OCI-LY7 (cell line): ENCODE measurements at regions of chr3 and their contacts with region 1.

Region 1: DNA sequence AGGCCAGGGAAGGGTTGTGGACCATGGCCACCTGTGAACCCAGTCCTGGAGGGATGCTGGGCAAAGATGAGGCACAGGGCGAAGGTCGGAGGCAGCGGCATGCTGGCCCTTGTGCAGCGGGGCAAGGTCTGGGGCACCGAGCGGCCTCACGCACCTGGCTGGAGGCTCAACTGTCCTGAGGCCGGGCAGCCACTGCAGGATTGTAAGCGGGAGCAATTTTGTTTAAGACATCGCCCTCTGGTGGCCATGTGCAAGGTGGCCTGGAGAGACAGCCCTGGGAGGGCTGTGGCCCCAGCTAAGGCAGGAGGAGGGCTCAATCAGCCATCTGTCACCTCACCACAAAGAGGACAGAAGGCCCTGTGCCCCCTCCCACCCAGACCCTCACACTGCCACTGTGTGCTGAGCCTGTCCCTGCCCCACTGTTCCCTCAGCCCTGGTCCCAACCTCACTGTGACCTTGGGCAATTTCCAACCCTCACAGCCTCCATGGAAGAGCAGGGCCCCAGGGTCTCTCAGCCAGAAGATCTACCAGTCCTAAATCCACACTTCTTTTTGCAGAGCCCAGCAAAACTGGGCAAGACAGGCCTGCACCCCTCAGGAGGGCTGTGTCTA is 46.2 kb downstream of the TPRA1 start:
- DNase-seq: peak; percentile 78
- H3K4me3 ChIP-seq: no peak overlapping the region
- H3K27ac ChIP-seq: no peak overlapping the region
- H3K4me1 ChIP-seq: peaks cover 3% of the 10 kb centered on the region
- CTCF ChIP-seq: peak; percentile 85

Region 2: DNA sequence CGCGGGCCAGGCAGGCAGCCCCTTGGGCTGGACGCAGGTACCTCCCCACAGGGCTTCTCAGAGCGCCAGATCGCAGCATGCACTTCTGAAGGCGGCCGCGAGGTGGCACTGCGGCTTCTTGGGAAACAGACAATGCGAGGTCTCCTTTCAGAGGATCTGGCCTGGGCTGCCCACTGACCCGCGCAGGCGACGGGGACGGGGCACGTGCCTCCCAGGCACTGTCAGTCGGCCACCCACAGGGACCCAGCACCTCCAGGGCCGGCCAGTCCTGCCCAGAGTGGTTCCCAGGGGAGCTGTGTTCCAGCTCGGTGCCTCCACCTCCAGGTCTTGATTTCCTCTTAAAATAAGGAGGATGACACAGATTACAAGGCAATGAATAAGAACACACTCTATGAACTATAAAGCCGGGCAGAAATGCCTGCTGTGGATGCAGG is 865.0 kb before region 1 on chr3:
- CTCF ChIA-PET with region 1: no interaction called
- POLR2A ChIA-PET with region 1: no interaction called
- intact Hi-C with region 1: loop called (anchors 10 kb)
- DNase-seq: peak; percentile 74
- H3K4me3 ChIP-seq: peak overlapping the region; percentile 34
- H3K27ac ChIP-seq: peak overlapping the region; percentile 38
- H3K4me1 ChIP-seq: peaks cover 27% of the 10 kb centered on the region
- CTCF ChIP-seq: peak; percentile 88

Region 3: DNA sequence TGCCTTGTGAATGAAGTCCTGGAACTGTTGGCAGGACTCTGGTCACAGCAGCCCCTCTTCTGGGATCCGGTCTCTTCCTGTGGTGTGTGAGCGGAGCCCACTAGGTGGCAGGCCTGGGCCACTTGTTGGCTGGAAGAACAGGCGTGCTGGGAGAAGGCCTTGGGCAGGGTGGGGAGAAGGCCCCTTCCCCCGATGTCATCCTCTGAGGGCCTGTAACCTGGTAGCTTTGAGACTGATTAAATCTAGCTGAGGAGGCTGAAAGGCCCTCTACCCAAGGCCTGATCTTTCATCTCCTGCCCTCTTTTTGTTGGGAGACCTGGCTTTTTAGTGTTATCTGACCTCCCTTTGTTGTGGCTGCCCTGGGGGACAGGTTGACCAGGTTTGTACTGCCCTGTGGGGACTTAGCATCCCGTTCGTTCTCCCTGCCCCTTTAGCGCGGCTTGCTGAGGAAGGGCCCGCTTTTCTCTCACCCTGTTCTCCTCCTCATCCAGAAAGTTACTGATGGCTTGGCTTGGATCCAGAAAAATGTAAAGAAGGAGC is 791.9 kb before region 1 on chr3:
- CTCF ChIA-PET with region 1: no interaction called
- POLR2A ChIA-PET with region 1: no interaction called
- intact Hi-C with region 1: loop called (anchors 2 kb)
- DNase-seq: peak; percentile 66
- H3K4me3 ChIP-seq: no peak overlapping the region
- H3K27ac ChIP-seq: no peak overlapping the region
- H3K4me1 ChIP-seq: no peaks in the 10 kb centered on the region
- CTCF ChIP-seq: peak; percentile 86

Region 4: GRCh38 chr3:127374086-127375010 is 169.9 kb before region 1 on chr3:
- CTCF ChIA-PET with region 1: no interaction called
- POLR2A ChIA-PET with region 1: no interaction called
- intact Hi-C with region 1: loop called (anchors 5 kb)
- DNase-seq: peak; percentile 18
- H3K4me3 ChIP-seq: no peak overlapping the region
- H3K27ac ChIP-seq: no peak overlapping the region
- H3K4me1 ChIP-seq: no peaks in the 10 kb centered on the region
- CTCF ChIP-seq: peak; percentile 73